Psoas muscle (tissue), 8 donors: ENCODE measurements at regions of chrX and their contacts with region 1.

Region 1: GRCh38 chrX:70096052-70096451 is 33.8 kb downstream of the OTUD6A start:
- DNase-seq: no peak
- ATAC-seq: no peak
- H3K4me3 ChIP-seq: no peak overlapping the region
- H3K27ac ChIP-seq: no peak overlapping the region
- H3K4me1 ChIP-seq: no peaks in the 10 kb centered on the region
- H3K27me3 ChIP-seq: peaks cover 0 to 8% (median 0%) of the 10 kb centered on the region in 3 donors
- CTCF ChIP-seq: no peak

Region 2: GRCh38 chrX:69493193-69493592 is 602.9 kb before region 1 on chrX:
- intact Hi-C with region 1: loop called (anchors 2 to 10 kb)
- DNase-seq: no peak
- ATAC-seq: peak in 2 of 4 donors; percentile 46 to 64
- H3K4me3 ChIP-seq: no peak overlapping the region
- H3K27ac ChIP-seq: no peak overlapping the region
- H3K4me1 ChIP-seq: no peaks in the 10 kb centered on the region
- H3K27me3 ChIP-seq: peaks cover 0 to 53% (median 0%) of the 10 kb centered on the region in 3 donors
- CTCF ChIP-seq: peak; percentile 36

Region 3: DNA sequence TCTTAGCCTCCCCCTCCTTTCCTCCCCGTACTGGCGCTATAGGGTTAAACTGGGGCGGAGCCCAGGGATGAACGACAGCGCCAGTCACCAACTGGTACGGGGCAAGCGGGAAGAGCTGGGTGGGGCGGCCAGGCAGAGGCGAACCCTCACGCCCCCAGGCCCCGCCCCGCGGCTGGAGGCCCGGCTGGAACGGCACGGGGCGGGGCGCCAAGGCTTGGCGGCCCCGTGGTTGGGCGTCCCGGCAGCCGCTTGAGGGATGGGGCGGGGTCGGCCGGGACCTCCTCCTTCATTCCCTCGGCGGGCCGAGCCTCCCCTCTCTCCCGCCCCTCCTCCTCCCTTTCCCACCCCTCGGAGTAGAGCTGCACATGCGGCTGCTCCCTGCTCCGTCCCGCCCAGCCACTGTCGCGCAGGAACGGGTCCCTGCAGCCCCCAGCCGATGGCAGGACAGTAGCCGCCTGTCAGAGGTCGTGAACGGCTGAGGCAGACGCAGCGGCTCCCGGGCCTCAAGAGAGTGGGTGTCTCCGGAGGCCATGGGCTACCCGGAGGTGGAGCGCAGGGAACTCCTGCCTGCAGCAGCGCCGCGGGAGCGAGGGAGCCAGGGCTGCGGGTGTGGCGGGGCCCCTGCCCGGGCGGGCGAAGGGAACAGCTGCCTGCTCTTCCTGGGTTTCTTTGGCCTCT is 480.1 kb before region 1 on chrX and contains the start of gene EDA:
- intact Hi-C with region 1: loop called in 1 of 2 experiments (anchors 10 kb)
- DNase-seq: peak; percentile 88 to 93
- ATAC-seq: peak; percentile 95 to 99 (median 98)
- H3K4me3 ChIP-seq: peak within 1 kb of the TSS; percentile 73
- H3K27ac ChIP-seq: peak within 1 kb of the TSS; percentile 30
- H3K4me1 ChIP-seq: no peaks in the 10 kb centered on the region
- H3K27me3 ChIP-seq: peaks cover 0 to 12% (median 0%) of the 10 kb centered on the region in 3 donors
- CTCF ChIP-seq: no peak
- total RNA-seq, gene EDA: 0.49 to 2.5 (median 1.1) TPM

Region 4: GRCh38 chrX:70030301-70030767 is 65.7 kb before region 1 on chrX:
- intact Hi-C with region 1: loop called in 1 of 2 experiments (anchors 2 kb)
- DNase-seq: no peak
- ATAC-seq: peak; percentile 55 to 84 (median 72)
- H3K4me3 ChIP-seq: no peak overlapping the region
- H3K27ac ChIP-seq: no peak overlapping the region
- H3K4me1 ChIP-seq: no peaks in the 10 kb centered on the region
- H3K27me3 ChIP-seq: peaks cover 0 to 35% (median 0%) of the 10 kb centered on the region in 3 donors
- CTCF ChIP-seq: peak; percentile 70

Region 5: DNA sequence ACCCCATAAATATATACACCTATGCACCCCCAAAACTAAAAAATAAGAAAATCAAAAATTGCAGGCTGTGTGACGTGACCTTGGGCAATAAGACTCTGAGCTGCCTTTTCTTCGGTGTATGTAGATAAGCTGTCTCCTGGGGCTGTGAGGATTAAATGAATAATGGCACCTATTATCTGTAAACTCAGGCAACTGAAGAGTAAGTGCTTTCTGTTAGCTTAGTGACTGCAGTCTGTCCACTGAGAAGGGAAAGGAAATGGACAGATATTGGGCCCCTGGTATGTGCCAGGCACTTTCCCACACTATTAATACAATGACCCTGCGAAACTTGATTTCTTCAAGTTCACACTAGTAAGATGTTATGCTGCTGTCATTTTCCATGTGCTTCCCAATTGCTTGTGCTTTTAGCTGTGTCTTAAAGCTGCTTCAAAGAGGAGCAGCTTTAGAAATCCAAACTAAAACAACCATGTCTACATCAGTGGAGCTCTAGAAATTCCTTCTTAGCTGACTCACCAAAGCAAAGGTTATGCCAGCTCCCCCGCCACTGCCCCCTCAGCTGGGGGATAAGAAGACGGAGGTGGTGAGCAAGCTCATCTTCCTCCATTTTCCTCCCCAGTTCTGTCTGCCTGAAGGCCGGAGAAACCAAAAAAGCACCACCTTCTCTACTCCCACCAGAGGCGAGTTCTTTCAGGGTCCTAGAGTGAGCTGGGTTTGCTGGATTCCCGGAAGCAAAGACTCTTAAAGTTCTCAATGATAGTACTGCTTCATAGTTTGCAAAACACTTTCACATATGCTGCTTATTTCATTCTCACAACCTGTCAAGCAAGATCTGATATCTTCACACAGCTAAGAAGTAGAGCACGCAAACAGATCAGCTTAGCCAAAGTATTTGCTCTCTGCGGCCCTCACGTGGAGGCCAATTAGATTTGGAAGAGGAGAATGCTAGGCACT is 72.5 kb after region 1 on chrX:
- intact Hi-C with region 1: no loop called
- DNase-seq: peak in 1 of 2 donors; percentile 19
- ATAC-seq: peak in 2 of 4 donors; percentile 13 to 26
- H3K4me3 ChIP-seq: no peak overlapping the region
- H3K27ac ChIP-seq: no peak overlapping the region
- H3K4me1 ChIP-seq: no peaks in the 10 kb centered on the region
- H3K27me3 ChIP-seq: peaks cover 0 to 3% (median 0%) of the 10 kb centered on the region in 3 donors
- CTCF ChIP-seq: no peak